Activated CD8-positive, alpha-beta T cell treated with anti-CD3 and anti-CD28 coated beads for 36 hours (primary cell): ENCODE measurements at regions of chr11 and their contacts with region 1.

Region 1: DNA sequence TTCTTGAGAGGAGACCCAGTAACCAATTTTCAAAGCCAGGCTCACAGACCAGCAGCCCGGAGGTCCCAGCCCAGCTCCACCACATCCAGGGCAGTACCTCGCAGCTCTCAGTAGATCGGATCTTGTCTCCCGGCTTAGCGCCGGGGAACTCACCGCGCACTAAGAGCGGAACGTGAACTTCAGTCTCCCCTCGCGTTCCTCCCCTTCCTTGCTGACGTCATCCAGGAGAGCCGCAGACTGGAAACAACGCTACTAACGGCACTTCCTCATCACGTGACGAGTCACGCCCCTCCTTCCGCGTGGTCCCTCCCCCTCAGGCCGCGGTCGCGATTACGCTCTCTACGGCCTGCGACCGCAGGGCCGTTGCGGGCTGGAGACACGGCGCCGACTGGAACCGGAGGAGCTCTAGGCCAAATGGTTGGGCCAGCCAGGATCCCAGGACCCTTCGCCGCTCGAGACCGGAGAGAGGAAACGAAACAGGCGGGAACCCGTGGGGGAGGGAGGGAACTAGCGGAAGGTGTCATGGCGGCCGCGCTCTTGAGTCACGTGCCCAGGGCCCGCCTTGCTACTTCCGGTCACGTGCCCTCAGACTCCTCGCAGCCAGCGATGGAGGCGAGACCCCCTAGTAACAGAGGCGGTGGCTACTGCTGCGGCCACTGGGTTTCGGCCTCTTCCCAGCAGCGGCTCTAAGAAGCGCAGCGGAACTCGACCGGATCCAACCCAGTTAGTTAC is at the starts of genes GTF2H1 and HPS5:
- DNase-seq: peak; percentile 97
- ATAC-seq: peak; percentile 90
- H3K4me3 Mint-ChIP-seq: peak within 1 kb of the TSS; percentile 90
- H3K27ac Mint-ChIP-seq: peak within 1 kb of the TSS; percentile 100
- H3K4me1 Mint-ChIP-seq: peaks cover 55% of the 10 kb centered on the region
- H3K27me3 Mint-ChIP-seq: no peaks in the 10 kb centered on the region
- CTCF ChIP-seq: no peak
- total RNA-seq, gene GTF2H1: 44.5 to 46.6 TPM
- total RNA-seq, gene HPS5: 16.0 to 17.2 TPM

Region 2: DNA sequence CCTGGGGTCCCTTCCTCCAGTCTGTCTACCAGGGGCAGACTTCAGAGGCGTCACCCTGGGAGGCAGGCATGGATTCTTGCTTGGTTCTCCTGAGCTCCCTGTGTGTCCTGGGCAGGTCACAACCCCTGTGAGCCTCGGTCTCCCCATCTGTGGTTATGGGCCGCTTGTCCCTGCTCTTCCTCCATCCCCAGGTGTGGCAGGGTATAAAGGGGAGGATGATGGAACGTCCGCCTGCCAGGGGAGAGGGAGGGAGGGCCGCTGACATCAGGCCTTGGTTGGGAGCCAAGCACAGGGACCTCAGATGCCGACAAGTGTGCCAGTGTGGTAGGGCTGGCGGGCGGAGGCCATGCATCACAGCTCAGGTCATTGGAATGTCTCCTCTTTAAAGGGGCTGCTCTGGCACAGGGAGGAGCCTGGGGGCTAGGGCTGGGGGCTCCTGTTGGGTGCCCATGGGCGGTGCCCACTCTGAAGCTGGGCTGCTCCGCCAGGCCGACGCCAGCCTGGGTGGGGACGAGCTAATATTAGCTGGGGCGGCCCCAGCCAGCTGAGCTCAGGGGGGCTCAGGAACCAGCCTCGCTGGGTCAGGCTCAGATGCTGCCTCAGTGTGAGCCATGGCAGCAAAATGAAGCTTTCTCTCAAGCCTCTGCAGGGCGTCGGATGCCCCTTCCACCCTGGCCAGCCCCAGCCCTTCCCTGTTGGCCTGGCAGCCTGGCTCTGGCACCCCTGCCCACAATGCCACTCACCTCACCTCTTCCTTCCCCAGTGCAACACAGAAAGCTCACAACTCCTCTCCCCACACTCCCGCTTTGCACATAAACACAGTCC is 574.8 kb before region 1 on chr11:
- CTCF ChIA-PET with region 1: no interaction called
- POLR2A ChIA-PET with region 1: no interaction called
- intact Hi-C with region 1: no loop called
- DNase-seq: no peak
- ATAC-seq: no peak
- H3K4me3 Mint-ChIP-seq: no peak overlapping the region
- H3K27ac Mint-ChIP-seq: no peak overlapping the region
- H3K4me1 Mint-ChIP-seq: no peaks in the 10 kb centered on the region
- H3K27me3 Mint-ChIP-seq: peaks cover 9% of the 10 kb centered on the region
- CTCF ChIP-seq: no peak

Region 3: GRCh38 chr11:18310800-18311340 is 11.3 kb before region 1 on chr11:
- CTCF ChIA-PET with region 1: interaction called, 4 read pairs
- POLR2A ChIA-PET with region 1: interaction called, 11 read pairs
- intact Hi-C with region 1: no loop called
- DNase-seq: no peak
- ATAC-seq: no peak
- H3K4me3 Mint-ChIP-seq: no peak overlapping the region
- H3K27ac Mint-ChIP-seq: no peak overlapping the region
- H3K4me1 Mint-ChIP-seq: peaks cover 4% of the 10 kb centered on the region
- H3K27me3 Mint-ChIP-seq: no peaks in the 10 kb centered on the region
- CTCF ChIP-seq: no peak

Region 4: GRCh38 chr11:18395735-18396504 is 73.8 kb after region 1 on chr11:
- CTCF ChIA-PET with region 1: interaction called, 4 read pairs
- POLR2A ChIA-PET with region 1: interaction called, 69 read pairs
- intact Hi-C with region 1: loop called (anchors 2 kb)
- DNase-seq: peak; percentile 94
- ATAC-seq: peak; percentile 68
- H3K4me3 Mint-ChIP-seq: peak overlapping the region; percentile 95
- H3K27ac Mint-ChIP-seq: peak overlapping the region; percentile 98
- H3K4me1 Mint-ChIP-seq: peaks cover 54% of the 10 kb centered on the region
- H3K27me3 Mint-ChIP-seq: no peaks in the 10 kb centered on the region
- CTCF ChIP-seq: no peak

Region 5: DNA sequence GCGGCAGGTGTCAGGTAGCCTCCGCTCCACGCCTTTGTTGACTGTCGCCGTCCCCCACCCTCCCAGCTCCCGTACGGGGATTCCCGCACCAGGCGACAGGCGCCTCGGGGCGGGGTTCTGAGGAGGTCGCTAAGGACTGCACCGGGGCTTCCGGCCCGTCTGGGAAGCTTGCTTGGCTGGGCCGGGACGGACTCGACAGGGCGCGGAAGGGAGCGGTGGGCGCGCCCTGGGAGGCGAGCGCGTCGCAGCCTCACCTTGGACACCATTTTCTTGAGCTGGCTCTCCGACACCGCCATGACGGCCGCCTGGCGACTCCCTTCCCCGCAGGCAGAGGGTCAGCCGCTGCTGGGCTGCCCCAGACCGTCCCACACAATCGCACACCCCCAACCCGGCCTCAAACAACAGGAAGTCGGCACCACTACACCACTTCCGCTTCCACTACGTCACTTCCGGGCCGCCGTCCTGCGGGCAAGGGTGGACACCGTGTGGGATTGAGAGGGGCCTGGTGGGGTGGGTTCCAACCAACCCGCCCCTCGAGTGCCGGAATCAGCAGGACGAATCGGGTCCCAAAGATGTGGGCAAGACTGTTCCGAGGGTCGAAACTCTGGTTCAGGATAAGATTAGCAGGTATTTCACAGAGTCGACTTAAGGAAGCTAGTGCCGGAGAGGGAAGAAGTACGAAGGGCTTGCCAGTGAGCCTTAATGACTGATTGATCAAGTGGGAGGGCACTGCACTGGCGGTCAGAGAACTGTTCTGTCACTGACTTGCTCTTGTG is 204.6 kb after region 1 on chr11 and contains the start of gene TSG101:
- CTCF ChIA-PET with region 1: no interaction called
- POLR2A ChIA-PET with region 1: interaction called, 10 read pairs
- intact Hi-C with region 1: loop called (anchors 5 kb)
- DNase-seq: peak; percentile 95
- ATAC-seq: peak; percentile 89
- H3K4me3 Mint-ChIP-seq: peak within 1 kb of the TSS; percentile 90
- H3K27ac Mint-ChIP-seq: peak within 1 kb of the TSS; percentile 99
- H3K4me1 Mint-ChIP-seq: peaks cover 50% of the 10 kb centered on the region
- H3K27me3 Mint-ChIP-seq: no peaks in the 10 kb centered on the region
- CTCF ChIP-seq: no peak
- total RNA-seq, gene TSG101: 34.0 to 37.4 TPM